GM12878 (cell line): ENCODE measurements at regions of chr11 and their contacts with region 1.

Region 1: GRCh38 chr11:16785520-16786128 is 47.2 kb downstream of the C11orf58 start:
- DNase-seq: peak; percentile 17
- ATAC-seq: peak; percentile 88
- H3K4me3 ChIP-seq: no peak overlapping the region
- H3K27ac ChIP-seq: no peak overlapping the region
- H3K4me1 ChIP-seq: no peaks in the 10 kb centered on the region
- H3K27me3 ChIP-seq: no peaks in the 10 kb centered on the region; a peak in 1 of 4 replicates
- CTCF ChIP-seq: peak; percentile 86 to 90 (median 88)
- EP300 ChIP-seq: no peak
- POLR2A ChIP-seq: no peak
- RAD21 ChIP-seq: peak; percentile 80

Region 2: DNA sequence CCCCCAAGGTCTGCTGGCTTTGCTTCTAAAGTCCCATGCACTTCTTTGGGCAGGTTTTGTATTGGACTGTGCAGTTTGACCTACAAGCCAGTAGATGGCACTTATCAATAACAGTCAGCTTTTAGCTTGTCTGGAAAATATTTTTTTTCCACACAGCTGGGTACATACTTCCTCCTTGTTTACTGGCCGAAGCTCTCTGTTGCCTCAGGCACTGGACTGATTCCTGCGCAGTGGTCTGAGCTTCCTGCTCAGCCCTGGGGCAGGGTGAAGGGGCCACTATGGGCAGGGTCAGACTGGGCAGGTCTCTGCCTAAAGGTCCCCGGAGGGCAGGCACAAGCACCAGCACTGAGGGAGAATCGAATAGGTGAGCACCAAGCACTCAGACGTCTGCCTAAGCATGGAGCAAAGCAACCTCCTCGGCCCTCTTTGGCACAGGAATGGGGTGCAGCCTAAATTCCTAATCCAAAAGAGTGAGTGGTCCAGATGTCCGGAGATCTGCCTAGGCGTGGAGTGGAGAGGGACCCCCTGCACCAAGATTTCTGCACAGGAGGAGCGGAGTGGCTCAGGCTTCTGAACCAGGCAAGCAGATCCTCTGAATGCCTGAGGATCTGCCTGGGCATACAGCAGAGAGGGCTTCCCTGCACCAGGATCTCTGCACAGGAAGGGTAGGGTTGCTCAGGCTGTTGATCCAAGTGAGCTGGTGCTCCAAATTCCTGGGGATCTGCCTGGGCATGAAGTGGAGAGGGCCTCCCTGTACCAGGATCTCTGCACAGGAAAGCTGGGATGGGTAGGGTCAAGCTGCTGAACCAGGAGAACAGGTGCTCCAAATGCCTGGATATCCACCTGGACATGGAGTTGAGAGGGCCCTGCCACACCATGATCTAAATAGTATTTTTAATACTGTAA is 153.1 kb before region 1 on chr11:
- CTCF ChIA-PET with region 1: interaction called, 5 read pairs
- POLR2A ChIA-PET with region 1: no interaction called
- RAD21 ChIA-PET with region 1: interaction called, 18 read pairs
- SMC1A ChIA-PET with region 1: interaction called, 3 read pairs
- in situ Hi-C with region 1: no loop called
- intact Hi-C with region 1: no loop called
- DNase-seq: no peak
- ATAC-seq: peak; percentile 73
- H3K4me3 ChIP-seq: no peak overlapping the region
- H3K27ac ChIP-seq: no peak overlapping the region
- H3K4me1 ChIP-seq: no peaks in the 10 kb centered on the region
- H3K27me3 ChIP-seq: no peaks in the 10 kb centered on the region
- CTCF ChIP-seq: peak; percentile 38 to 52 (median 44); a peak in 5 of 6 replicates
- EP300 ChIP-seq: no peak
- POLR2A ChIP-seq: no peak
- RAD21 ChIP-seq: peak; percentile 29; the same call in 1 of the 2 replicates

Region 3: GRCh38 chr11:16801288-16801980 is 15.8 kb after region 1 on chr11:
- CTCF ChIA-PET with region 1: interaction called, 15 read pairs
- POLR2A ChIA-PET with region 1: no interaction called
- RAD21 ChIA-PET with region 1: interaction called, 5 read pairs
- SMC1A ChIA-PET with region 1: interaction called, 4 read pairs
- in situ Hi-C with region 1: no loop called
- intact Hi-C with region 1: no loop called
- DNase-seq: no peak
- ATAC-seq: no peak
- H3K4me3 ChIP-seq: no peak overlapping the region
- H3K27ac ChIP-seq: no peak overlapping the region
- H3K4me1 ChIP-seq: 0 out of 2 replicates have a peak, but pooled peaks cover 4% of the 10 kb centered on the region
- H3K27me3 ChIP-seq: peaks cover 2% of the 10 kb centered on the region in 2 experiments; a peak in 1 of 4 replicates
- CTCF ChIP-seq: no peak
- EP300 ChIP-seq: no peak
- POLR2A ChIP-seq: no peak
- RAD21 ChIP-seq: no peak

Region 4: DNA sequence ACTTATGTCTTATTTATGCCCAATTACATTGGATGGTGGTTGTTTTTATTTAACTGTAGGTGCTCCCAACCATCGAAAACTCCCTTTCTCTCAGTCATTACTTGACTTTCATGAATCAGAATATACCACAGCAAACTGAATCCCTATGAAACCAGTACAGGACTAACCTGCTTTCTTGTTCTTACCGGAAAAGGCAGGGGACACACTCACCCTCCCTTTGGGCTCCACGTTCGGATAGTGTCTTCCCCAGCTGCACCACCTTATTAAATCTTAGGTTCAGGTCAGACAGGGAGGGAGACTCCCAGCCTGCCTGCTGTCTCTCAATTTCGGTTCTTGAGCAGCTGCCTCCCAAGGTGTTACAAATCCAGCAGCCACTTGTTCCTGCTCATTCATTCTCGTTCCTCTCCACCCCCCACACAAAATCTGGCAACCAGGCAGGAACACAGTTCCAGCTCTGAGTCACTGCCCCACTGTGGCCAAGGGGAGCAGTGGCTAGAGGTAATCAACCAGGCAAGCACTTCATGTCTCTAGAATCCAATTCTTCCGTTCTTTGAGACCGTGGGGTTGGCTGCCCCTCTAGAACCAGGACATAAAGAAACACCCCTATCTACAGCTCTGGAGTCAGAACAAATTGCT is 95.6 kb after region 1 on chr11:
- CTCF ChIA-PET with region 1: interaction called, 21 read pairs
- POLR2A ChIA-PET with region 1: no interaction called
- RAD21 ChIA-PET with region 1: no interaction called
- SMC1A ChIA-PET with region 1: interaction called, 3 read pairs
- in situ Hi-C with region 1: no loop called
- intact Hi-C with region 1: no loop called
- DNase-seq: no peak
- ATAC-seq: peak; percentile 72
- H3K4me3 ChIP-seq: no peak overlapping the region
- H3K27ac ChIP-seq: no peak overlapping the region
- H3K4me1 ChIP-seq: peaks cover 3% of the 10 kb centered on the region; the same call in 1 of the 2 replicates
- H3K27me3 ChIP-seq: no peaks in the 10 kb centered on the region; a peak in 1 of 4 replicates
- CTCF ChIP-seq: peak in 1 of 3 experiments; percentile 21; a peak in 2 of 6 replicates
- EP300 ChIP-seq: no peak
- POLR2A ChIP-seq: no peak
- RAD21 ChIP-seq: peak; percentile 29

Region 5: DNA sequence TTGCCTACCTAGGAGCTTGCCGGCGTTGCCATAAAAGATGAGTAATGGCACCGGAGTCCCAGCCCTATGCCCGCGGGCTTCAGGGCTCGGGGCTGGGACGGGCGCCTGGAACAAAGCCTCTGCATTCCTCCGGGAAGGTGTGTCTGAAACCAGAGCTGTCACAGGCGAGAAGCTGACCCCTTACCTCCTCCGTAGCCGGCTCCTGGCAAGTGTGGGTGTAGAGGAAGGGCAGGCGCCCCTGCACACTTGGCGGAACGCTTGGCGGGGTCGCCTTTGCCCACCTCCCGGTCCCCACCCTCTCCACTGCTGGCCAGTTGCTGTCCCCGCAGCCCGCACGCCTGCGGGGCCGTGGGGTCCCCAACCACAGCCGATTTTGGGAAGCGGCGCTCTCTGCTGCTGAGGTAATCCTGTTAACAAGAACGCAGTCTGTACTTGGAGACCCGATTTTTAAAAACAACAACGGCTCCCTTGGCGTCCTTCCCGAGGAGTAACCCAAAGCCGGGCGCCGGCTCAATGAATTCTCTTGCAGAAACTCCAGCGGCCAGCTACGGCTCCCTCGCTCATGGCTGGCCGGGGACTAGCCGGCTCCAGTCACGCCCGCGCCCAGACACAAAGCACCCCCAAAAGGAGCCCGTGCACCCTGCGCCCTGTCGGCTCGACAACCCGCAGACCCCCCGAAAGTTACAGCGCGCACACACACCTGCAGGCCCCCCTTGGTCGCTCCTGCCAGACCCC is 139.4 kb after region 1 on chr11:
- CTCF ChIA-PET with region 1: interaction called, 26 read pairs
- POLR2A ChIA-PET with region 1: no interaction called
- RAD21 ChIA-PET with region 1: interaction called, 3 read pairs
- SMC1A ChIA-PET with region 1: no interaction called
- in situ Hi-C with region 1: no loop called
- intact Hi-C with region 1: loop called (anchors 10 kb)
- DNase-seq: no peak
- ATAC-seq: peak; percentile 39
- H3K4me3 ChIP-seq: peak overlapping the region; percentile 64
- H3K27ac ChIP-seq: no peak overlapping the region
- H3K4me1 ChIP-seq: peaks cover 22% of the 10 kb centered on the region
- H3K27me3 ChIP-seq: peaks cover 12 to 13% of the 10 kb centered on the region in 2 experiments
- CTCF ChIP-seq: no peak
- EP300 ChIP-seq: no peak
- POLR2A ChIP-seq: no peak
- RAD21 ChIP-seq: no peak

Region 6: DNA sequence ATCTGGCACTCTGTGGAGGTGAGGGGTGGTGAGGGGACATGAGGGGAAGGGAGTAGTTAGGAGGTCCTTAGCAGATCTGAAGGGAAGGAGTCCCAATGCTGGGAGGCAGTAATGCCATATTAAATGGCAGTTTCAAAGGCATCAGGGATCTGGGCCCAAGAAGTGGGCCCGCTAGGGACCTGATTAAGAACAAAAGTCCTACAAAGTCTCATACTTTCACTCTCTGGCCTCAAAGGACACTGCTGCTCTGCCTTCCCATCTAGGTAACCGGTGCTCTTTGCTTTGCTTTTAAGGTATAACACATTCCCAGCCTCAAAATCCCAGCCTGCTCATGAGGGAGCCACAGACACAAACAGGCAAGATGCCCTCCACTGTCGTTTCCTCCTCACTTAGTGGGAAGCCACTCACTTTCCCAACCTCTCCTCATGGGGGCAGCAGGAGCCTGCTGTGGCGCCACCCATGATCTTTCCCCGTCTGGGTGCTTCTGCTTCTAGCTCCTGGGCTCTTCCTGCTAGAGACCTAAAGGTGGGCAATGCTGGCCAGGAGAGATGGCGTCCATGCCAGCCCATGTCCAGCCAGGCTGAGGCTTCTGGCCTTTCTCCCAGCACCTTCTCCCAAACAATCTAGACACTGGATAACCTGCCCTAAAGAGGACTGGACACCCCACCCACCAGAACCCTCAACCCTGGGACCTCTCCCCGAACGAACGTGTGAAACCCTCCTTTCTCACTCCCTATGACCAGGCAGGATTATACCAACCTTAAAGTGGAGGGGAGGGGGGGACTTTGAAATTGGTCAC is 160.2 kb after region 1 on chr11:
- CTCF ChIA-PET with region 1: interaction called, 36 read pairs
- POLR2A ChIA-PET with region 1: no interaction called
- RAD21 ChIA-PET with region 1: no interaction called
- SMC1A ChIA-PET with region 1: interaction called, 8 read pairs
- in situ Hi-C with region 1: no loop called
- intact Hi-C with region 1: no loop called
- DNase-seq: peak; percentile 61
- ATAC-seq: peak; percentile 92
- H3K4me3 ChIP-seq: peak overlapping the region; percentile 39; the same call in 1 of the 2 replicates
- H3K27ac ChIP-seq: peak overlapping the region; percentile 64
- H3K4me1 ChIP-seq: peaks cover 12% of the 10 kb centered on the region
- H3K27me3 ChIP-seq: no peaks in the 10 kb centered on the region
- CTCF ChIP-seq: peak; percentile 86 to 89 (median 88)
- EP300 ChIP-seq: no peak
- POLR2A ChIP-seq: no peak
- RAD21 ChIP-seq: peak; percentile 97